Naive thymus-derived CD4-positive, alpha-beta T cell (primary cell): ENCODE measurements at regions of chr2 and their contacts with region 1.

Region 1: DNA sequence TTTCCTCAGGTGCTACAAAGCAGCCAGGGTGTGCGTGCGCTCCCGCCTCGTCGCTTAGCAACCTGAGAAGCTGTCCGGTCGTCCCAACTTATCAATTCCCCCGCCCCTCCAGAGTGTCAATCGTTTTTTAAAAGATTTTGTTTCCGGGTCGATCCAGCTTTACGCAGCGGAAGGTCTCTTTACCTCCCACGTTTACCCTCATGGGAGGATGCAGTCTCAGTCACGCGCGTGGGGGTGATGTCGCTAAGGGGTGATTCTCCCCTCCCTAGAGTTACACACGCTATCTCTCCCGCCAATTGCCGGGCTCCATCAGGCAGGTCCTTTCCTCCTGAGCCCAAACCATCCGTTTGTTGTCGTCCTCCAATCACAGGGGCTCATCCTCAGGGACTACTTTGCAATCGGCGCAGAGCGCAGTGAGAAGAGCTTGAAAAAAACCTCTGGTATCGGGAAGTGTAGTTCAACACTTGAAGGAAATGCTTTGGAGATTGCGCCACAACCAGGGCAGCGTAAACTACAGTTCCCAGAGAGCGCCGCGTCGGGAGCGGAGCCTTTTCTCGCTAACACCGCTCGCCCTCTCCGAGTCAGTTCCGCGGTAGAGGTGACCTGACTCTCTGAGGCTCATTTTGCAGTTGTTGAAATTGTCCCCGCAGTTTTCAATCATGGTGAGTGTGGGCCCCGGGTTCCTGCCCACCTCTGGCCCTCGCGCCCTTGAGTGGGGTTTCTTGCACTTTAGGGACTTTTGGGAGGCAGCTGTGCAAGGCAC is at the starts of genes MDH1 and WDPCP:
- DNase-seq: peak; percentile 74 to 99 (median 96)
- ATAC-seq: peak; percentile 89
- H3K4me3 ChIP-seq: peak within 1 kb of the TSS; percentile 91
- H3K4me3 Mint-ChIP-seq: peak within 1 kb of the TSS; percentile 89 to 99 (median 94)
- H3K27ac ChIP-seq: peak within 1 kb of the TSS; percentile 89
- H3K27ac Mint-ChIP-seq: peak within 1 kb of the TSS; percentile 89 to 99 (median 95)
- H3K4me1 ChIP-seq: peaks cover 16 to 23% of the 10 kb centered on the region in 2 donors
- H3K4me1 Mint-ChIP-seq: peaks cover 24 to 63% (median 45%) of the 10 kb centered on the region in 7 donors
- H3K27me3 ChIP-seq: no peaks in the 10 kb centered on the region
- H3K27me3 Mint-ChIP-seq: no peaks in the 10 kb centered on the region
- total RNA-seq, gene MDH1: 76.5 to 180 (median 84.2) TPM
- total RNA-seq, gene WDPCP: 7.6 to 19.2 (median 16.1) TPM

Region 2: DNA sequence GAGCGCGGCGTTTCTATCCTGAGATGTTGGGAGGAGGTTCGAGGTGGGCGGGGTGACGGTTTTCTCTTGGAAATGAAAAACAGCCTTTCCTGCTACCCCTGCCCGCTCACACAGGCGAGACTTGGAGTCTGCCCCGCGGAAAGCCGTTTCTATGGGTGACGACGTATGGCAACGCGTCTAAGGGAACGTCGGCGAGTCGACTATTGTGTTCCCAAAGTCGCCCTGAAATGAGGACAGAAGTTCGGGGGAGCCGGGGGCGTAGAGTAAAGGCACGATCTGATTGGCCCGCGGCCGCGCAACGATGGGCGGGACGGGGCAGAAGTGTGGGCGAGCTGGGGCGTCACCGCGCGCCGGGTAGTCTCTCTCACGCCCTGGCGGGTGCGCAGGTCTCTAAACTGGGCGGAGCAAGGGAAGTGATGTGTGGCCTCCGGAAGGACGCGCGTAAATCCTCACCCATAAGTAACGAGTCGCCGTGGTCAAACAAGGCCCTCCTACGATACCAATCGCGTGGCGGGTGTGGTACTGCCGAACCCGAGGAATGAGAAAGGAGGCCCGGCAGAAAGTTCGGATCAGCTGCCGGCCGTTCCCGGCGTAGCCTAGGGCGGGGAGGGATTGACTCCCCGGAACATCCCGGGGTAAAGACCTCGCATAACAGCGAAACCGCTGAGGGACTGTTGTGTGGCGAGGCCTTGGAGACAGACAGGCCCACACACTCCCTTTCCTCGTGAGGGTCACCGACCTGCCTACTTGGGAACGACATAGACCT is 1824.3 kb before region 1 on chr2:
- CTCF ChIA-PET with region 1: no interaction called
- POLR2A ChIA-PET with region 1: no interaction called
- intact Hi-C with region 1: loop called in 1 of 2 experiments (anchors 5 kb)
- DNase-seq: peak; percentile 89 to 98 (median 97)
- ATAC-seq: peak; percentile 99
- H3K4me3 ChIP-seq: peak overlapping the region; percentile 71
- H3K4me3 Mint-ChIP-seq: peak overlapping the region; percentile 80 to 98 (median 95)
- H3K27ac ChIP-seq: peak overlapping the region; percentile 93
- H3K27ac Mint-ChIP-seq: peak overlapping the region; percentile 94 to 99 (median 98)
- H3K4me1 ChIP-seq: peaks cover 6 to 9% of the 10 kb centered on the region in 2 donors
- H3K4me1 Mint-ChIP-seq: peaks cover 0 to 16% (median 10%) of the 10 kb centered on the region in 7 donors
- H3K27me3 ChIP-seq: no peaks in the 10 kb centered on the region
- H3K27me3 Mint-ChIP-seq: peaks cover 0 to under 1% (median 0%) of the 10 kb centered on the region in 5 donors

Region 3: DNA sequence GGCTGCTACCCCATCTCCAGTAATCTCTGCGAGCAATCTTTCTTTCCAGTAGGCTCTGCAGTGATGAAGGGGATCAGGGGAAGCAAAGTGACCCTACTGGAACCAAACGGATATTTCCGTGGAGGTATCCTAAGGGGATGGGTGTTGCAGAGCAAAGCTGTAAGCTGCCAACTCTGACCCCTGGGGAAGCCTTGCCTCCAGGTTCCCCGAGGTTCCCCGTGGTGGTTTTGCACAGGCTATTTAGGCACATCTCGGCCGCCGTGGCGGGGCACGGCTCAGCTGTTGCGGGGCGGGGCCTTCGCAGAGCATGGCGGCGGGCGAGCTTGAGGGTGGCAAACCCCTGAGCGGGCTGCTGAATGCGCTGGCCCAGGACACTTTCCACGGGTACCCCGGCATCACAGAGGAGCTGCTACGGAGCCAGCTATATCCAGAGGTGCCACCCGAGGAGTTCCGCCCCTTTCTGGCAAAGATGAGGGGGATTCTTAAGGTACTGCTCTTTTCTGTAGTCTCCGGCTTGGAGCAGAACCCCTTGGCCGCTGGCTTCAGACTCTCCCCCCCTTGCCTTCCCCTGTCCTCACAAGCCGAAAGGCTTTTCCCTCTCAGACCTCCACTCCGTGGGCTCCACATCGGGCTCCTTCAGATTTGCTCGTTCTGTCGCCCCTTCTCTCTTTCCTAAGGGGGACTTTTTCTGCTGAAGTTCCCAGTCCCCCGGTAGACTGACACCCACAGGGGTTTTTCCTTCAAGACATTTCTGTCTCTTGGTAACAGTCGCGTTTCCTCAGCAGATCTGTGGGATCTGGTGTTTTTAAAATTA is 1683.0 kb before region 1 on chr2 and contains the start of gene COMMD1:
- CTCF ChIA-PET with region 1: no interaction called
- POLR2A ChIA-PET with region 1: interaction called, 4 read pairs
- intact Hi-C with region 1: loop called (anchors 1 to 5 kb)
- DNase-seq: peak; percentile 64 to 81 (median 76)
- ATAC-seq: peak; percentile 99
- H3K4me3 ChIP-seq: peak within 1 kb of the TSS; percentile 76
- H3K4me3 Mint-ChIP-seq: peak within 1 kb of the TSS; percentile 95 to 98 (median 96)
- H3K27ac ChIP-seq: peak within 1 kb of the TSS; percentile 83
- H3K27ac Mint-ChIP-seq: peak within 1 kb of the TSS; percentile 80 to 97 (median 86)
- H3K4me1 ChIP-seq: peaks cover 0 to 12% of the 10 kb centered on the region in 2 donors
- H3K4me1 Mint-ChIP-seq: peaks cover 14 to 42% (median 30%) of the 10 kb centered on the region in 7 donors
- H3K27me3 ChIP-seq: no peaks in the 10 kb centered on the region
- H3K27me3 Mint-ChIP-seq: no peaks in the 10 kb centered on the region
- total RNA-seq, gene COMMD1: 15.6 to 28.3 (median 20.8) TPM

Region 4: GRCh38 chr2:63679252-63679855 is 90.8 kb after region 1 on chr2:
- CTCF ChIA-PET with region 1: no interaction called
- POLR2A ChIA-PET with region 1: no interaction called
- intact Hi-C with region 1: no loop called
- DNase-seq: no peak
- ATAC-seq: no peak
- H3K4me3 ChIP-seq: no peak overlapping the region
- H3K4me3 Mint-ChIP-seq: no peak overlapping the region
- H3K27ac ChIP-seq: no peak overlapping the region
- H3K27ac Mint-ChIP-seq: no peak overlapping the region
- H3K4me1 ChIP-seq: peaks cover 0 to 5% of the 10 kb centered on the region in 2 donors
- H3K4me1 Mint-ChIP-seq: peaks cover 6 to 25% (median 23%) of the 10 kb centered on the region in 7 donors
- H3K27me3 ChIP-seq: no peaks in the 10 kb centered on the region
- H3K27me3 Mint-ChIP-seq: peaks cover 0 to 21% (median under 1%) of the 10 kb centered on the region in 5 donors

Region 5: DNA sequence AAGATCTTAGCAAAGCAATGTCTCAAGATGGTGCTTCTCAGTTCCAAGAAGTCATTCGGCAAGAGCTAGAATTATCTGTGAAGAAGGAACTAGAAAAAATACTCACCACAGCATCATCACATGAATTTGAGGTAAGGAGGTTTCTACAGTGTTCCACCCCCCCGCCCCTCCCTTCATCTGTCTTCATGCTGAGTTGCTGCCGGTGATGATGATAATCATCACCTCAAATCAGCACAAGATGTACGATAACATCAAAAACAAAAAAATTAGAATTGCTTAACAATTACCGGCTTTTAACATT is 267.7 kb after region 1 on chr2:
- CTCF ChIA-PET with region 1: interaction called, 3 read pairs
- POLR2A ChIA-PET with region 1: interaction called, 3 read pairs
- intact Hi-C with region 1: loop called in 1 of 2 experiments (anchors 1 kb)
- DNase-seq: peak in 7 of 9 donors; percentile 54 to 87 (median 78)
- ATAC-seq: peak; percentile 93
- H3K4me3 ChIP-seq: peak overlapping the region; percentile 28
- H3K4me3 Mint-ChIP-seq: peak overlapping the region; percentile 42 to 78 (median 73)
- H3K27ac ChIP-seq: peak overlapping the region; percentile 81
- H3K27ac Mint-ChIP-seq: peak overlapping the region; percentile 85 to 97 (median 93)
- H3K4me1 ChIP-seq: peaks cover 27 to 36% of the 10 kb centered on the region in 2 donors
- H3K4me1 Mint-ChIP-seq: peaks cover 40 to 73% (median 71%) of the 10 kb centered on the region in 7 donors
- H3K27me3 ChIP-seq: no peaks in the 10 kb centered on the region
- H3K27me3 Mint-ChIP-seq: no peaks in the 10 kb centered on the region

Region 6: DNA sequence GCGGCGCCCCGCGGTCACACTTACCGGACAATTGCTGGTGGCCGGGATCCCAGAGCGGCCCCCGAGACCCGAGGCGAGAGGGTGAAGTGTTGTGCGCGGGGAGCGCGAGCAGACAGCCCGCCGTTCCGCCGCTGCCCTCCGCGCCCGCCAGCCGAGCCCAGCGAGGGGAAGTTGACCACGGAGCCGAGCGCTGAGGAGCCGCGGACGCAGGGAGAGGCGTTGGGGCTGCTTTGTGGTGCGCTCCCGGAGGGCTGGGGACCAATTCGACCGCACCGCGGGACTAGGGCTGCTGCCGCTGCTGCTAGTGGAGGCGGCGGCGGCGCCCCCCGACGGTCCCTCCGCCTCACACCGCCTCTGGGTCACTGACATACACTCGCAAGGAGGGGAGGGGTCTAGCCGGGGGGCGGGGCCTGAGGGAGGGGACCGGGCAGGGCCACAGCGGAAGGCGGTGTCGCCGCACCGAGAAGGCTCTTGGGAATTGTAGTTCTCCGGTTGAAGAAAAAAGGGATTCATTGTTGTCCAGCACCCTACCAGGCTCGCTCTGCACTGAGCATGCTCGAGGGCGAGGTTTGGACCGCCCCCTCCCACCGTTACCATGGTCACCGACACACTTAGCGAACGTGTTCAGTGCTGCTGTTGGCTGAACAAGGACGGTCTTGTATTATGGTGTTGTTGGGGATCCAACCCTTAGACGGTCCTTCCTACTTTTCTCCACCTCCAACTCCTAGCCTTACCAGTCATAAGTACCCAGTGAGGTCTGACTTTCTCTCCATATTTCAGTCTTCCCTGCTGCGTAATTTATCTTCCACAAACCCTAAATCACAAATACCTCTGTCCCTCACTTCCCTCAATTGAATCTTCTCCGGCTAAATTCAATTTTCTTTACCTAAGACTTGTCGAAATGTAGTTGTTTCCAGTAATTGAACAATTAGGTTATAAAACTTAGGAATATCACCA is 555.8 kb after region 1 on chr2 and contains the start of gene PELI1:
- CTCF ChIA-PET with region 1: no interaction called
- POLR2A ChIA-PET with region 1: no interaction called
- intact Hi-C with region 1: loop called (anchors 1 kb)
- DNase-seq: peak; percentile 82 to 95 (median 88)
- ATAC-seq: peak; percentile 97
- H3K4me3 ChIP-seq: peak within 1 kb of the TSS; percentile 88
- H3K4me3 Mint-ChIP-seq: peak within 1 kb of the TSS in 9 of 10 donors; percentile 87 to 98 (median 93)
- H3K27ac ChIP-seq: peak within 1 kb of the TSS; percentile 98
- H3K27ac Mint-ChIP-seq: peak within 1 kb of the TSS; percentile 93 to 99 (median 96)
- H3K4me1 ChIP-seq: peaks cover 11 to 24% of the 10 kb centered on the region in 2 donors
- H3K4me1 Mint-ChIP-seq: peaks cover 19 to 33% (median 31%) of the 10 kb centered on the region in 7 donors
- H3K27me3 ChIP-seq: no peaks in the 10 kb centered on the region
- H3K27me3 Mint-ChIP-seq: no peaks in the 10 kb centered on the region
- total RNA-seq, gene PELI1: 33.4 to 170 (median 57.2) TPM

Region 7: DNA sequence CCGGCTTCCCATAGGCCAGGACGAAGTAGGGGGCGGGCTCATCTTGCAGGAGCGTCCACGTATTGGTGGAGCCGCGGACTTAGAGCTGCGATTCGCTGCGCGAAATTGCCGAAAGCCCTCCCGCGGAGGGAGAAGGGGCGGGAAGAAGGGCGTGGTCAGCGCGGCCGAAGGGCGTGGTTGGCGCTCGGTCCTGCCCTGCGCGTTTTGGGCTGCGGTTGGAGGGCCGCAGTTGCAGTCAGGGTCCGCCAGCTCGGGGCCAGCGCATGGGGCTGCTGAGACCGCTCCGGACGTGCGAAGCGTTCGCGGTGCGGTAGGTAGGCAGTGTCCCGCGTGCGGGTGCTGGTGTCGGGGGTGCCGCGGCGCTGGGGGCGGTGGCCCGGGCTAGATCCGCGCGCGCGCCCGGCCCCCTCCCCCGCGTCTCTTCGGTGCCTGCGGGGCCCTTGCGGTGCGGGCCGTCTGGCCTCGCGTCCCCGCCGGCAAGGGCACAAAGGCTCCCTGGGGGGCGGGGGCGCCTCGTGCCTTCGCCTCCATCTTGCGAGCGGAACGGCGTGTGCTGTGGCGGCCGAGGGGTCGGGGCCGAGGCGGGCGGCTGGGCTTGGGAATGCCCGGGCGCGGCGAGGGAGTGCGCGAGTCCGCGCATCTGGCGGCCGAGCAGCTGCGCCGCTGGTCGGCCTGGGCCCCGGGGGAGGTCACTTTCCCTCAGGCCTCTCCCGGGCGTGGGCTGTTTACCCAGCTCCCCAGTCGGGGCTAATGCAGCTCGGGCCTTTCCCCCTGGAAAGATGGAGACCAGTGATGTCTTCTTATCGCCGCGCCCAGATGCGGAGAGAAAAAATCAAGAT is 1467.9 kb after region 1 on chr2 and contains the start of gene CEP68:
- CTCF ChIA-PET with region 1: no interaction called
- POLR2A ChIA-PET with region 1: no interaction called
- intact Hi-C with region 1: loop called in 1 of 2 experiments (anchors 1 kb)
- DNase-seq: peak; percentile 88 to 96 (median 95)
- ATAC-seq: peak; percentile 96
- H3K4me3 ChIP-seq: peak within 1 kb of the TSS; percentile 54
- H3K4me3 Mint-ChIP-seq: peak within 1 kb of the TSS; percentile 79 to 99 (median 94)
- H3K27ac ChIP-seq: peak within 1 kb of the TSS; percentile 76
- H3K27ac Mint-ChIP-seq: peak within 1 kb of the TSS; percentile 84 to 97 (median 90)
- H3K4me1 ChIP-seq: peaks cover 10 to 42% of the 10 kb centered on the region in 2 donors
- H3K4me1 Mint-ChIP-seq: peaks cover 41 to 81% (median 61%) of the 10 kb centered on the region in 7 donors
- H3K27me3 ChIP-seq: no peaks in the 10 kb centered on the region
- H3K27me3 Mint-ChIP-seq: peaks cover 0 to 2% (median 0%) of the 10 kb centered on the region in 5 donors
- total RNA-seq, gene CEP68: 8.5 to 52.0 (median 20.8) TPM

Region 8: DNA sequence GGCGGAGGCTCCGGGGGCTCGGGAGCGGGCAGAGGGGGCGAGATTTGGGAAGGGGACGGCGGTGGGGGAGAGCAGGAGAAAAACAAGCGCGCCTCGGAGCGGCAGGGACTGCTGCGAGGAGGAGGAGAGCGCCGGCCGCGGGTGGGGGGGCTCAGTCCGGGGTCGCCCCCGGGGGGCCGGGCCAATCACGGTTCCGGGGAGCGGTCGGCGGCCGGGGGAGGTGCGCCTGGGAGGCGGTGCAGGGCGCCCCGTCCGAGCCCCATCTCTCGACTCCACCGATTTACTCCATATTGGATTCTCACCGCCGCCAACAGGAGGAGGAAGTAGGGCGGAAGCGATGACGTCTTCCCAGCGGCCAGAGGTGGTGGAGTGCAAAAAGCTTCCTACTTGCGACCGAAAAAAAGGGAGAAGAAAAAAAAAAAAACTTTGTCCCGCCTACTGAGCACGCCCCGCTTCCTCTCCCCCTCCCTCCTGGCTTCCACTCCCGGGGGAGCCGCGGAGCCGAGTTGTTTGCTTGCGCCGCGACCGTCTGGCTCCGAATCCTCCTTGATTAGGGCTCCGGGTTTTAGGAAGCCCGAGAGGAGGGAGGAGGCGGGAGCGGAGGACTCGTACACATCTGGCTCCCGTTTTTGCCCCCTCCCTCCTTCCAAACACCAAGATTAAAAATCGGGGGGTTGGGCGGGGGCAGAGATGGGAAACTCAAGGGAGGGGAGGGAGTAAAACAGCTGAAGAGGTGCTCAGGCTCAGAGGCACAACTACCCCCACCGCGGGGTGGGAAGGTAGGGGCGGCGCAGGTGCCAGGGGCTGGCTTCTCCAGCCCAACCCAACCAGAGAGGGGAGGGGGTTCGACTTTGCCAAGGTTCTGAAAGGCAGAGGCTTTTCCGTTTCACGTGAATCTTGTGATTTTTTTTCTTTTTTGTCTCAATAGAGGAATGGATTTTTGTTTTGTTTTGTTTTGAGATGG is 1843.9 kb after region 1 on chr2 and contains the start of gene SPRED2:
- CTCF ChIA-PET with region 1: no interaction called
- POLR2A ChIA-PET with region 1: no interaction called
- intact Hi-C with region 1: loop called (anchors 1 to 5 kb)
- DNase-seq: peak; percentile 36 to 75 (median 51)
- ATAC-seq: peak; percentile 58
- H3K4me3 ChIP-seq: peak within 1 kb of the TSS; percentile 75
- H3K4me3 Mint-ChIP-seq: peak within 1 kb of the TSS; percentile 89 to 95 (median 90)
- H3K27ac ChIP-seq: peak within 1 kb of the TSS; percentile 8
- H3K27ac Mint-ChIP-seq: peak within 1 kb of the TSS in 5 of 9 donors; percentile 31 to 90 (median 69)
- H3K4me1 ChIP-seq: peaks cover 8 to 11% of the 10 kb centered on the region in 2 donors
- H3K4me1 Mint-ChIP-seq: peaks cover 7 to 33% (median 16%) of the 10 kb centered on the region in 7 donors
- H3K27me3 ChIP-seq: peaks cover 0 to 22% of the 10 kb centered on the region in 2 donors
- H3K27me3 Mint-ChIP-seq: peaks cover 27 to 67% (median 36%) of the 10 kb centered on the region in 5 donors
- total RNA-seq, gene SPRED2: 0.34 to 7.9 (median 1.7) TPM